ENCODE measurements at regions of chr3 and their contacts with region 1.

Region 1: DNA sequence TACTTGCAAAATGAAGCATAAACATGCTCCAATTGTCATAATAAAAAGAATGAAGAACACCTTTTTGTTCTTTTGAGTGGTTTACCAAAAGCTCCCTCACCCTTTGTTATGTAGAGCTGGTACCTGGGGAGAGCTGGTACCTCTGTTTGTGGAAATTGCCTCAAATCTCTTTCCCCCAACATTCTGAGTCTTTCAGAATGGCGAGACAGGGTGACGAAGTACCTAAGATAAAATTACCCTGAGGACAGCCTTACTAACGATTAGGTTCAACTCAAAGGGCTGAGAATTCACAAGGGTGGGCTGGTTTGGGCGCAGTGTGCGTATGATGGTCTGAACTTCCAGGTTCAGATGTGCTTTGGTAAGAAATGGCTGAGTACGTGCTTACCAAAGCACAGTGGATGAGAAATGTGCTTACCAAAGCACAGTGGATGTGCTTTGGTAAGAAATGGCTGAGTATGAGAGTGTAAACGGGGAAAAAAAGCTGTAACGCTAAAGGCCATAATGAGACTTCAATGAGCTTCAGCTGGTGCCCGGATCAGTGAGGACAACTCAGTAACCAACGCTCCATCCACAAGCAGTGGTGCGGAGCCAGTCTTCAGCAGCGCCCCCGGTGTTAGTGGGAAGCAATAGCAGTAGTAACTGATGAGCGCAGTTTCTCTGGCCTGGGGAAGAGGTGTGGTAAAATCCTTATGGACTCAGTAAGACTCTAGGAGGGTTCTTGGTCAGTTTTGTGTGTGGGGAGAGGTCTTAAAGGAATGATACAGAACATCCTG is 72.3 kb upstream of the LRIG1 start:
- DNase-seq: peak; percentile 87
- ATAC-seq: peak; percentile 97
- H3K4me3 Mint-ChIP-seq: peak overlapping the region; percentile 53
- H3K27ac Mint-ChIP-seq: peak overlapping the region; percentile 95
- H3K4me1 Mint-ChIP-seq: peaks cover 28% of the 10 kb centered on the region
- H3K27me3 Mint-ChIP-seq: peaks cover 45% of the 10 kb centered on the region
- CTCF ChIP-seq: peak; percentile 69

Region 2: GRCh38 chr3:66483406-66483906 is 89.7 kb before region 1 on chr3:
- CTCF ChIA-PET with region 1: interaction called, 10 read pairs
- POLR2A ChIA-PET with region 1: no interaction called
- DNase-seq: peak; percentile 26
- ATAC-seq: peak; percentile 31
- H3K4me3 Mint-ChIP-seq: peak overlapping the region; percentile 3; the same call in 1 of the 2 replicates
- H3K27ac Mint-ChIP-seq: peak overlapping the region; percentile 48
- H3K4me1 Mint-ChIP-seq: peaks cover 51% of the 10 kb centered on the region
- H3K27me3 Mint-ChIP-seq: no peaks in the 10 kb centered on the region
- CTCF ChIP-seq: no peak

Region 3: DNA sequence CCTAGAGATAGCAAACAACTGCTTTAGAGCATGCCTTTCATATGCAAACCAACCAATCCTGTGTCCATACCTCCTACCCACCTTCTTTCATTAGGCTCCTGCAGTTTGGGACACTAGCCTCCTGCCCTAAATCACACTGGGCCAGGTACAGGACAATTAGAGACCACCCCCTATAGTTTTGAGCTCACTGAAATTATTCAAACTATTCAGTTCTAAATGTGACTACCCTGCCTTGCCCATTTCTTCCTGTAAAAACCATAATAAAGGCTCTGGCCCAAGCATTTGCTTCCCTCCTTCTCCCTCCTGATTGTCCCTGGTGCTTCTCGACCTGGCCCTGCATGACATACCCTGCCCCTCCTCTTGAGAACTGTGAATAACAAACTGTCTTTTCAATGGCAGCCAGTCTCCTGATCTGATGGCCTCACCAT is 41.0 kb before region 1 on chr3:
- CTCF ChIA-PET with region 1: interaction called, 15 read pairs
- POLR2A ChIA-PET with region 1: no interaction called
- DNase-seq: peak; percentile 34
- ATAC-seq: peak; percentile 97
- H3K4me3 Mint-ChIP-seq: peak overlapping the region; percentile 49
- H3K27ac Mint-ChIP-seq: peak overlapping the region; percentile 82
- H3K4me1 Mint-ChIP-seq: peaks cover 51% of the 10 kb centered on the region
- H3K27me3 Mint-ChIP-seq: peaks cover 23% of the 10 kb centered on the region
- CTCF ChIP-seq: no peak

Region 4: GRCh38 chr3:66803206-66803605 is 230.1 kb after region 1 on chr3:
- CTCF ChIA-PET with region 1: interaction called, 13 read pairs
- POLR2A ChIA-PET with region 1: no interaction called
- DNase-seq: no peak
- ATAC-seq: peak; percentile 89
- H3K4me3 Mint-ChIP-seq: no peak overlapping the region
- H3K27ac Mint-ChIP-seq: no peak overlapping the region
- H3K4me1 Mint-ChIP-seq: peaks cover 20% of the 10 kb centered on the region
- H3K27me3 Mint-ChIP-seq: peaks cover 2% of the 10 kb centered on the region; the same call in 1 of the 2 replicates
- CTCF ChIP-seq: peak; percentile 38